ENCODE measurements at regions of chr16 and their contacts with region 1.

Region 1: DNA sequence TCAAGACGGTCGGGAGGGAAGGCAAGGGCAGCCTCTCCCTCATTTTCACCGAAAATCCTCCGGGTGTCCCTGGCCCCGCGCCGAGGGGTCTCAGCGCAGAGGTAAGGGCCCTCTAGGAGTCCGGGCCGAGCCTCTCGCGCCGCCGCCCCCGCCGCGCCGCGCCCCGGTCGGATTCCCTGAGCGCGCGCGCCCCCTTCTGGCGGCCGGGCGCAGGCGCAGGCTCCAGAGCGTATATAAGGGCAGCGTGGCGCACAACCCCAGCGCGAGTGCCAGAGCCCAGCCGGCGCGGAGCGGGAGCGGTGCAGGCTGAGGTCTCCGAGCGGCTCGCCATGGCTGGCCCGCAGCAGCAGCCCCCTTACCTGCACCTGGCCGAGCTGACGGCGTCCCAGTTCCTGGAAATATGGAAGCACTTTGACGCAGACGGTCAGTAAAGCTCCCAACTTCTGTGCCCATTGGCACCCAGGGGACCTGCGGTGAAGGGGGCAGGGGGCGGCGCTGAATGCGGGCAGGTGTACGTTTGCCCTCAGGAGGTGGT is at the start of gene CALB2:
- DNase-seq: peak; percentile 15 to 81 (median 59)
- ATAC-seq: peak; percentile 91
- H3K4me3 ChIP-seq: no peak within 1 kb of the TSS
- H3K4me3 Mint-ChIP-seq: peak within 1 kb of the TSS in 8 of 10 donors; percentile 14 to 57 (median 46)
- H3K27ac ChIP-seq: no peak within 1 kb of the TSS
- H3K27ac Mint-ChIP-seq: no peak within 1 kb of the TSS
- H3K4me1 ChIP-seq: no peaks in the 10 kb centered on the region
- H3K4me1 Mint-ChIP-seq: peaks cover 0 to 4% (median 0%) of the 10 kb centered on the region in 7 donors
- H3K27me3 ChIP-seq: no peaks in the 10 kb centered on the region
- H3K27me3 Mint-ChIP-seq: peaks cover 16 to 45% (median 25%) of the 10 kb centered on the region in 5 donors
- total RNA-seq, gene CALB2: not detected

Region 2: GRCh38 chr16:70800781-70801530 is 557.6 kb before region 1 on chr16 and contains the start of gene VAC14:
- CTCF ChIA-PET with region 1: no interaction called
- POLR2A ChIA-PET with region 1: no interaction called
- intact Hi-C with region 1: loop called in 1 of 2 experiments (anchors 5 kb)
- DNase-seq: peak; percentile 96 to 99 (median 97)
- ATAC-seq: peak; percentile 99
- H3K4me3 ChIP-seq: peak within 1 kb of the TSS; percentile 90
- H3K4me3 Mint-ChIP-seq: peak within 1 kb of the TSS; percentile 90 to 98 (median 94)
- H3K27ac ChIP-seq: peak within 1 kb of the TSS; percentile 78
- H3K27ac Mint-ChIP-seq: peak within 1 kb of the TSS; percentile 84 to 95 (median 92)
- H3K4me1 ChIP-seq: peaks cover 11 to 17% of the 10 kb centered on the region in 2 donors
- H3K4me1 Mint-ChIP-seq: peaks cover 19 to 49% (median 44%) of the 10 kb centered on the region in 7 donors
- H3K27me3 ChIP-seq: no peaks in the 10 kb centered on the region
- H3K27me3 Mint-ChIP-seq: peaks cover 0 to 15% (median 0%) of the 10 kb centered on the region in 5 donors
- total RNA-seq, gene VAC14: 36.7 to 47.1 (median 45.9) TPM

Region 3: DNA sequence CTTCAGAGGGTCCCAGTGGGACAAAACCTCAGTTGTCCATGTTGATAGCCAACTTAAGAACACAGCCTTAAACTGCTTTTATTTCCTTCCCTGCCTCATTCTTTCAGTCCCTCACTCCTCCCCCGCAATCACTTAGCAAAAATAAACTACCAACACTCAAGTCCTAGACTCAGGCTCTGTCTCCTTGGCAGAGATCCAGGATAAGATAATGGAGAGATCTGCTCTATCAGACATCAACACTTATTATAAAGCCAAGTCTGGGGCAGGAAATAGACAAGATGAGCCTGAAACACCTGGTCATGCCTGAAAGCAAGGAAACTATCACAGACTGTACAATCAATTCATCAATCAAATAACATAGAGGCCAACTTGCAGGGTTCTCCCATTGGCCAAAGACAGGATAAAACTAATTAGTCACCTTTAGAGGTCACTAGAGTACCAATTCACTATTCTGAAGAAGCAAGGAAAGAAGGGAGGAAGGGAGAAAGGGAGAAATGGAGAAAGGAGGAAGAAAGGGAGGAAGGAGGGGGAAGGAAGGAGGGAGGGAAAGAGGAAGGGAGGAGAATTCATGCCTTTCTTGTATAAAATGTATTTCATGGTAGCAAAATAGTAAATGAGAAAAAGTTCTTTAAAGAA is 143.7 kb before region 1 on chr16:
- CTCF ChIA-PET with region 1: no interaction called
- POLR2A ChIA-PET with region 1: no interaction called
- intact Hi-C with region 1: loop called in 1 of 2 experiments (anchors 5 kb)
- DNase-seq: peak in 1 of 9 donors; percentile 2
- ATAC-seq: no peak
- H3K4me3 ChIP-seq: no peak overlapping the region
- H3K4me3 Mint-ChIP-seq: no peak overlapping the region
- H3K27ac ChIP-seq: no peak overlapping the region
- H3K27ac Mint-ChIP-seq: no peak overlapping the region
- H3K4me1 ChIP-seq: no peaks in the 10 kb centered on the region
- H3K4me1 Mint-ChIP-seq: no peaks in the 10 kb centered on the region
- H3K27me3 ChIP-seq: no peaks in the 10 kb centered on the region
- H3K27me3 Mint-ChIP-seq: peaks cover 5 to 44% (median 33%) of the 10 kb centered on the region in 5 donors

Region 4: GRCh38 chr16:71319999-71320398 is 38.5 kb before region 1 on chr16:
- CTCF ChIA-PET with region 1: no interaction called
- POLR2A ChIA-PET with region 1: no interaction called
- intact Hi-C with region 1: no loop called
- DNase-seq: no peak
- ATAC-seq: no peak
- H3K4me3 ChIP-seq: no peak overlapping the region
- H3K4me3 Mint-ChIP-seq: no peak overlapping the region
- H3K27ac ChIP-seq: no peak overlapping the region
- H3K27ac Mint-ChIP-seq: no peak overlapping the region
- H3K4me1 ChIP-seq: no peaks in the 10 kb centered on the region
- H3K4me1 Mint-ChIP-seq: no peaks in the 10 kb centered on the region
- H3K27me3 ChIP-seq: peaks cover 0 to 1% of the 10 kb centered on the region in 2 donors
- H3K27me3 Mint-ChIP-seq: peaks cover 0 to 41% (median 33%) of the 10 kb centered on the region in 5 donors

Region 5: DNA sequence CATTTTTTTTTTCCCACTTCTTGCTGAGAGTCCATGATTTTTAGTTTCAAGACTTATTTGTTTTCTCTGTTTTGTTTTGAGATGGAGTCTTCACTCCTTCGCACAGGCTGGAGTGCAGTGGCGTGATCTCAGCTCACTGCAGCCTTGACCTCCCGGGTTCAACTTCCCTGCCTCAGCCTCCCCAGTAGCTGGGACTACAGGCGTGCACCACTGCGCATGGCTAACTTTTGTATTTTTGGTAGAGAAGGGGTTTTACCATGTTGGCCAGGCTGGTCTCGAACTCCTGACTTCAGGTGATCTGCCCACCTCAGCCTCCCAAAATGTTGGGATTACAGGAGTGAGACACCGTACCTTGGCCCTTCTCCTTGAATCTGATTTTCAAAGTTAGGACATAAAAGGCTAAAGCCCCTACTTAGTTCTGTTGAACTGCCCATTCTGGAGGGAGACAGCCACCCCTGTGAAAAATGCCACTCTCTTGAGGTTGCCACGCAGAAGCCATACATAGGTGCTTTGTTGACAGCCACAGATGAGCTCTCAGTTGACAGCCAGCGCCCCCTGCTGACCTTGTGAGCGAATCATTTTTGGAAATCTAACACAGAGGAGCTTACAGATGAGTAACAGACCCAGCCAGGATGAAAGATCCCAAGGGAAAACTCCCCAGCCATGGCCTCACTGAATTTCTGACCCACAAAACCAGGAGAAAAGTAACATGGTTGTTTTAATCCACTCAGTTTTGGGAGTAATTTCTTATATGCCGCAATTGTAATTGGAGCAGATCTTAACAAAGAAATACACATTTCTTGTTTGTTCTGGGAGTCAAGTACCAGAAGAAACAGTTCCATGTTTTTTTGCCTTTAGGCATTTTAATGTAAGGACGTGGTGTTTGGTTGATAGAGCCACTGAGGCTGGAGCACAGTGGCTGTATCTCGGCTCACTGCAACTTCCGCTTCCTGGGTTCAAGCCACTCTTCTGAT is 602.8 kb after region 1 on chr16:
- CTCF ChIA-PET with region 1: no interaction called
- POLR2A ChIA-PET with region 1: no interaction called
- intact Hi-C with region 1: no loop called
- DNase-seq: peak; percentile 52 to 81 (median 74)
- ATAC-seq: peak; percentile 98
- H3K4me3 ChIP-seq: no peak overlapping the region
- H3K4me3 Mint-ChIP-seq: no peak overlapping the region
- H3K27ac ChIP-seq: no peak overlapping the region
- H3K27ac Mint-ChIP-seq: no peak overlapping the region
- H3K4me1 ChIP-seq: no peaks in the 10 kb centered on the region
- H3K4me1 Mint-ChIP-seq: peaks cover 3 to 24% (median 17%) of the 10 kb centered on the region in 7 donors
- H3K27me3 ChIP-seq: no peaks in the 10 kb centered on the region
- H3K27me3 Mint-ChIP-seq: peaks cover 0 to 8% (median 0%) of the 10 kb centered on the region in 5 donors

Measured in naive thymus-derived CD4-positive, alpha-beta T cell (primary cell).